A549 (cell line): ENCODE measurements at regions of chr20 and their contacts with region 1.

Region 1: DNA sequence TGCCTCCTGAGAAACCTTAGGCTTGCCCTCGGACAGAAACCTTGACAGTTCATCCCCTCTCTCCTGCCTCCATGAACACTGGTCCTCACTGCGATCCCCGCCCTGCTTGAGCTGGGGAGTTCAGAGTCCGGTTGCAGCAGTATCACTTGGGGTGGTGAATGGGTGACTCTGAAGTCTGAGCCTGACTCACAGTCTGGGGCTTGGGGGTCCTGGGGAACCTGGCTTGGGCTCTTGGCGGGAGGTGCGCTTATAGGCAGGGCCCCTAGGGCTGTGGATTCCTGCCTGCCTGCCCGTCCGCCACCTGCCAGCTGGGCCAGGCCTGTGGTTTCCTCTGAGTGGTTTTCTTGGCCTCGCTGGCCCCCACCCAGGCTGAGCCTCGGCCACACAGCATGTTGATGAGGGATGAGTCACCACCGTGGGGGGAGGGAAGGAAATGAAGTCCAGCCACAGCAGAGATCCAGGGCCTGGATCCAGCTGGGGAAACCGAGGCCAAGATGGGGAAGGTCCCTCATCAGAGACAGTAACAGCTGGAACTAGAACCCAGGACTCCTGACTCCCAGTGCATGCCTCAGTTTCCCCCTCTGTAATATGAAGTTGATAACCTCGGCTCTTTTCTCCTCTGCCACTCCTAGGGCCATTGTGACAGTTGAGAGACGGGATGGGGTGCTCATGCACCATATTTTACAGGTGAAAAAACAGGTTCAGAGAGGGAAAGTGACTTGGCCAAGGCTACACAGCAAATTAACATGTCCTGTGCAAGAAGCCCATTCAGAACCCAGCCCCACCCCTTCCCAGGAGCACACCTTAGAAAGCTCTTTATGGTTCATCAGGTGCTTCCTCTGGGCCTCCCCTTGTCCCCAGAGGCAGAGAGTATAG is 9.2 kb downstream of the FOXS1 start:
- DNase-seq: peak; percentile 56 to 72
- ATAC-seq: peak; percentile 55 to 63
- H3K4me3 ChIP-seq: no peak overlapping the region
- H3K27ac ChIP-seq: peak overlapping the region; percentile 84 to 86
- H3K4me1 ChIP-seq: peaks cover 69% of the 10 kb centered on the region
- CTCF ChIP-seq: no peak
- EP300 ChIP-seq: peak; percentile 17 to 47; a peak in 2 of 5 replicates
- POLR2A ChIP-seq: no peak
- RAD21 ChIP-seq: no peak

Region 2: DNA sequence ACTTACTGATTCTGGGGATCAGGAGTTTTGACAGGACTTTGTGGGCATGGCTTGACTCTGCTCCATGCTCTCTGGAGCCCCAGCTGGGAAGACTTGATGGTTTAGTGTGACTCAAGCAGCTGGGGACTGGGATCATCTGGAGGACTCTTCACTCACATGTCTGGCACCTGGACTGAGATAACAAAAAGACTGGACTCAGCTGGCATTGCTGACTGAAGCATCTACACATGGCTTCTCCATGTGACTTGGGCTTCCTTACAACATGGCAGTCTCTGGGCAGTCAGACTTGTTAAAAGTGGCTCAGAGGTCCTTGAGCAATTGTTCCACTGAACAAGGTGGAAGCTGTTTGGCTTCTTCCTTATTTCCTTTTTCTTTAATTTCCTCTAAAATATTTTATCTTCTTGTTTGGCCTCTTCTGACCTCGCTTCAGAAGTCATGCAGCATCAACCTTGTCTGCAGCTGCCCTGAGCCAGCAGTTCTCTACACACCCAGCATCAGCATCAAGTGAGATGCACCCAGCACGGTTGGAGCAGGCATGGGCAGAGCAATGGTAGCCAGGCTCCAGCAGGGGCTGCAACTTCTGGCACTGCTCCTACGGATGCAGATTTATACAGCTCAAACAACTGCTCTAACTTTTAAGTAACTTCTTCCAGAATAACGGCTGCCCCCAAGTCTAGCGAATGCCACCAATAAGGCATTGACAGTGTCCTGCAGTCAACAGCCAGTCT is 327.5 kb before region 1 on chr20:
- CTCF ChIA-PET with region 1: no interaction called
- POLR2A ChIA-PET with region 1: no interaction called
- DNase-seq: no peak
- ATAC-seq: peak; percentile 65 to 66; a peak in 4 of 6 replicates
- H3K4me3 ChIP-seq: no peak overlapping the region
- H3K27ac ChIP-seq: no peak overlapping the region
- H3K4me1 ChIP-seq: peaks cover 9% of the 10 kb centered on the region
- CTCF ChIP-seq: no peak
- EP300 ChIP-seq: no peak
- POLR2A ChIP-seq: no peak
- RAD21 ChIP-seq: no peak

Region 3: GRCh38 chr20:31815408-31816188 is 20.6 kb before region 1 on chr20:
- CTCF ChIA-PET with region 1: interaction called, 133 read pairs
- POLR2A ChIA-PET with region 1: no interaction called
- DNase-seq: peak in 1 of 2 experiments; percentile 19
- ATAC-seq: peak; percentile 25 to 27; a peak in 3 of 6 replicates
- H3K4me3 ChIP-seq: no peak overlapping the region
- H3K27ac ChIP-seq: no peak overlapping the region
- H3K4me1 ChIP-seq: no peaks in the 10 kb centered on the region
- CTCF ChIP-seq: no peak
- EP300 ChIP-seq: no peak
- POLR2A ChIP-seq: no peak
- RAD21 ChIP-seq: no peak